Naive thymus-derived CD4-positive, alpha-beta T cell (primary cell): ENCODE measurements at regions of chr5 and their contacts with region 1.

Region 1: GRCh38 chr5:111757355-111758283 is 625 bp upstream of the NREP start:
- DNase-seq: peak; percentile 65 to 89 (median 86)
- ATAC-seq: peak; percentile 87
- H3K4me3 ChIP-seq: peak overlapping the region; percentile 64
- H3K4me3 Mint-ChIP-seq: peak overlapping the region; percentile 83 to 94 (median 90)
- H3K27ac ChIP-seq: peak overlapping the region; percentile 75
- H3K27ac Mint-ChIP-seq: peak overlapping the region; percentile 57 to 92 (median 83)
- H3K4me1 ChIP-seq: peaks cover 0 to 4% of the 10 kb centered on the region in 2 donors
- H3K4me1 Mint-ChIP-seq: peaks cover 4 to 29% (median 18%) of the 10 kb centered on the region in 7 donors
- H3K27me3 ChIP-seq: no peaks in the 10 kb centered on the region
- H3K27me3 Mint-ChIP-seq: peaks cover 0 to 6% (median 0%) of the 10 kb centered on the region in 5 donors

Region 2: GRCh38 chr5:109946649-109947009 is 1811.0 kb before region 1 on chr5:
- CTCF ChIA-PET with region 1: no interaction called
- POLR2A ChIA-PET with region 1: no interaction called
- intact Hi-C with region 1: no loop called
- DNase-seq: no peak
- ATAC-seq: no peak
- H3K4me3 ChIP-seq: no peak overlapping the region
- H3K4me3 Mint-ChIP-seq: no peak overlapping the region
- H3K27ac ChIP-seq: no peak overlapping the region
- H3K27ac Mint-ChIP-seq: no peak overlapping the region
- H3K4me1 ChIP-seq: peaks cover 0 to 12% of the 10 kb centered on the region in 2 donors
- H3K4me1 Mint-ChIP-seq: peaks cover 10 to 39% (median 23%) of the 10 kb centered on the region in 7 donors
- H3K27me3 ChIP-seq: no peaks in the 10 kb centered on the region
- H3K27me3 Mint-ChIP-seq: peaks cover 0 to 6% (median 0%) of the 10 kb centered on the region in 5 donors

Region 3: DNA sequence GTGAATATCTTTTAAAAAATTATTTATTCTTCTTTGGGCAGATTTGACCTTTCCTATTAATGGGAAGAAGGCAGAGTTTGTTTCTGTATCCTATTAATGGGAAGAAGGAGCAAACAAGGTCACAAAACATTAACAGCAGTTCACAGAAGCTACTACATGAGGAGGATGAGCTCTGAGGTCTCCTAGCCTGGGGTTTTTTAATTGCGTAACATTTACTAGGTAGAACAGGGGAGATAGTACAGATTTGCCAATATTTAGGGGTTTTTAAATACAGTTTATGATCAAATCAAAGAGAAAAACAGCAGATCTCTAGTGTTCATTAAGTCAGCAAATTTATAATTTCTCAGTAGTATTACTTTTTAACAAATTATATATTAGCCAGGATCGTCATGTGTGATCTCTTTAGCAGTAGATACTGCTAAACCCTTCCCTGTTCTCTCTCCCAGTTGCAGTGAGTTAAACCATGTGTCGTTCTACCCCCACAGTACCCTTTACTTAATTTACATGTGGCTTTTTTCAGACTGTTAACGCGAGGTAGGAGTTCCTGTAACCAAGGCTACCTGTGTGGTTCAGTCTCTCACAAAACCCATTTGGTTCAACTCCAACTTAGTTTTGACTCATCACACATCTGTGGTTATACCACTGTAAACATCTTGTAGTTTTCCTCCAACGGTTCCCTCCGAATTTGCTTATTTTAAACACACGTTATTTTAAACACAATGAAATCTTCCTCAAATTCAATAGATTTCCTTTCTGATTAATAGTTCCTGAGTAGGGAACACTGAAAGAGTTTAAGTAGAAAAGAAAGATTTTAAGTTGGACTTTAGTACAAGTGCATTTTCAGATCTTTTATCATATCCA is 1005.5 kb before region 1 on chr5:
- CTCF ChIA-PET with region 1: no interaction called
- POLR2A ChIA-PET with region 1: no interaction called
- intact Hi-C with region 1: loop called in 1 of 2 experiments (anchors 5 kb)
- DNase-seq: peak in 2 of 9 donors; percentile 8 to 30
- ATAC-seq: peak; percentile 82
- H3K4me3 ChIP-seq: no peak overlapping the region
- H3K4me3 Mint-ChIP-seq: peak overlapping the region in 1 of 10 donors; percentile 68
- H3K27ac ChIP-seq: no peak overlapping the region
- H3K27ac Mint-ChIP-seq: peak overlapping the region in 8 of 9 donors; percentile 5 to 84 (median 59)
- H3K4me1 ChIP-seq: peaks cover 0 to 12% of the 10 kb centered on the region in 2 donors
- H3K4me1 Mint-ChIP-seq: peaks cover 15 to 47% (median 34%) of the 10 kb centered on the region in 7 donors
- H3K27me3 ChIP-seq: no peaks in the 10 kb centered on the region
- H3K27me3 Mint-ChIP-seq: no peaks in the 10 kb centered on the region

Region 4: DNA sequence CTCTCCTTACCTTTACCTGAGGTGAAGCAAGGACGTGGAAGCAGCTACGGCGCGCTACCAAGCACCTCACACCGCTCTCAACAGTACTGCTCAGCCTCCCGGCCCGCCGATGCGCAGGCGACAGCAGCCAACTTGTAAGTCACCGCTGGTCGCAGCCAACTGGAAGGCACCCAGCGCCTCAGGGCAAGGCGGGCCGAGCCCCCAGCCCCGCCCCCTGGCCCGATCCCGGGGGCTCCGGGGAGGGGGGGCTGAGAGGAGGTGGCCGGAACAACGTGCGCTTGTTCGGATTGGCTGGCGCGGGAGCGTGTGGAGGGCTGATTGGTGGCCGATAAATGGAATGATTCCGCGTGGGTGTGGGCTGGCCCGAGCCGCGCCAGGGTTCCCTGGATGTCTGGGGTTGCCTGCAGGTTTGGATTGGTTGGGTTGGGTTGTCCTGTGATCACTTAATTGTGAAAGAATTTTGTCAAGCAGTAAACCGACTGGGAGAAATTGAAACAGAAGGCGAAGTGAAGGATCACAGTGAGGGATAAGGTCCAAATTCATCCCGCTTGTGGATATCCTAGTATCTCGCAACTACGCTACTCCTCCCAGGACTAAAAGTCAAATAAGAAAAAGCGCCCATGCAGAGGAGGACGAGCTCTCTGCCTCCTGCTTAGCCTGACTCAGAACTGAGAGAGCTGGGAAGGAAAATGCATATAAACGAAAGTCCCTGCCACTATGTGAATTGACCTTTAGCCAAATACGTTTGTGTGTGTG is 245.1 kb before region 1 on chr5 and contains the start of gene STARD4:
- CTCF ChIA-PET with region 1: no interaction called
- POLR2A ChIA-PET with region 1: interaction called, 4 read pairs
- intact Hi-C with region 1: loop called (anchors 1 kb)
- DNase-seq: peak; percentile 79 to 94 (median 92)
- ATAC-seq: peak; percentile 97
- H3K4me3 ChIP-seq: peak within 1 kb of the TSS; percentile 81
- H3K4me3 Mint-ChIP-seq: peak within 1 kb of the TSS; percentile 91 to 100 (median 98)
- H3K27ac ChIP-seq: peak within 1 kb of the TSS; percentile 73
- H3K27ac Mint-ChIP-seq: peak within 1 kb of the TSS; percentile 90 to 98 (median 94)
- H3K4me1 ChIP-seq: peaks cover 0 to 14% of the 10 kb centered on the region in 2 donors
- H3K4me1 Mint-ChIP-seq: peaks cover 17 to 53% (median 28%) of the 10 kb centered on the region in 7 donors
- H3K27me3 ChIP-seq: no peaks in the 10 kb centered on the region
- H3K27me3 Mint-ChIP-seq: no peaks in the 10 kb centered on the region
- total RNA-seq, gene STARD4: 11.1 to 70.8 (median 17.1) TPM

Region 5: GRCh38 chr5:111550279-111551020 is 207.2 kb before region 1 on chr5:
- CTCF ChIA-PET with region 1: no interaction called
- POLR2A ChIA-PET with region 1: no interaction called
- intact Hi-C with region 1: loop called (anchors 5 kb)
- DNase-seq: peak; percentile 35 to 79 (median 68)
- ATAC-seq: peak; percentile 93
- H3K4me3 ChIP-seq: no peak overlapping the region
- H3K4me3 Mint-ChIP-seq: peak overlapping the region in 1 of 10 donors; percentile 19
- H3K27ac ChIP-seq: no peak overlapping the region
- H3K27ac Mint-ChIP-seq: peak overlapping the region in 2 of 9 donors; percentile 36 to 47
- H3K4me1 ChIP-seq: peaks cover 0 to 12% of the 10 kb centered on the region in 2 donors
- H3K4me1 Mint-ChIP-seq: peaks cover 8 to 22% (median 20%) of the 10 kb centered on the region in 7 donors
- H3K27me3 ChIP-seq: no peaks in the 10 kb centered on the region
- H3K27me3 Mint-ChIP-seq: peaks cover 0 to 4% (median 2%) of the 10 kb centered on the region in 5 donors

Region 6: DNA sequence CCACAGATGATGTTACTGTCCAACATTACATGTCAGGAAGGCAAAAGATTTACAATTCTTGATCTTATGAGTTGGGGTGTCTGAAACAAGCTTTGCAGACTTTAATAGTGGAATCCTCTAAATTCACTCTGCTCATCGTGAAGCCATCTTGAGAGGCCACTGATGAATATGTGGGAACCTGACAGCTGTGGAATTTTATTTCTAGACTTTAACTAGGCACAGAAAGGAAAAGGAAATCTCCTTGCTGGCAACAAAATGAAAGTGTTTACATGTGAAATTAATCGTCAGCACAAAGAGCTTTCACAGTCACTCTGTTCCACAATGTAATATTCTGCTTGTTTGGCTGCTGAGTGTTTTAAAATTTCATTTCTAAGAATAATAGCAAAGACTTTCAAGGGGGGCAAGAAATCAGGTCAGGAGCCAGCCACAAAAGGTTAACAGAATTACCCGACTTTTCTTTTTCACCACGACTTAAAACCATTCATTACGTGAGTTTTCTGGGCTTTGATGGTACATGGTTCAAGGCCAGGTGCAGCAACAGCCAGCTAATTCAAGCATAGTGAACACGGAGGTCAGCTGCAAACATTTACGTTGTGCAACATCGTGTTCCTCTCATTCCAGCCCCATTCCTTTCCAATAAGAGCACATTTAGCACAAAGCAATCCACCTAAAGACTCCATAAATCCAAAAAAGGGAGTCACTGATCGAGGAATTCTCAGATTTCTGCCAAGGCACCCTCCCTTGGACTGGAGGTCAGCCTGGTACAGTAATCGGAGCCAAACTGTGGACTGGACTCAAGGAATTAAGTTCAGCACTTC is 15.2 kb before region 1 on chr5:
- CTCF ChIA-PET with region 1: no interaction called
- POLR2A ChIA-PET with region 1: no interaction called
- intact Hi-C with region 1: loop called in 1 of 2 experiments (anchors 1 kb)
- DNase-seq: no peak
- ATAC-seq: no peak
- H3K4me3 ChIP-seq: no peak overlapping the region
- H3K4me3 Mint-ChIP-seq: peak overlapping the region in 8 of 10 donors; percentile 22 to 77 (median 49)
- H3K27ac ChIP-seq: no peak overlapping the region
- H3K27ac Mint-ChIP-seq: peak overlapping the region in 4 of 9 donors; percentile 34 to 78 (median 70)
- H3K4me1 ChIP-seq: no peaks in the 10 kb centered on the region
- H3K4me1 Mint-ChIP-seq: peaks cover 0 to 46% (median 18%) of the 10 kb centered on the region in 7 donors
- H3K27me3 ChIP-seq: no peaks in the 10 kb centered on the region
- H3K27me3 Mint-ChIP-seq: peaks cover 0 to 15% (median 11%) of the 10 kb centered on the region in 5 donors

Region 7: GRCh38 chr5:112077180-112077579 is 319.6 kb after region 1 on chr5:
- CTCF ChIA-PET with region 1: no interaction called
- POLR2A ChIA-PET with region 1: no interaction called
- intact Hi-C with region 1: no loop called
- DNase-seq: no peak
- ATAC-seq: no peak
- H3K4me3 ChIP-seq: no peak overlapping the region
- H3K4me3 Mint-ChIP-seq: no peak overlapping the region
- H3K27ac ChIP-seq: no peak overlapping the region
- H3K27ac Mint-ChIP-seq: no peak overlapping the region
- H3K4me1 ChIP-seq: no peaks in the 10 kb centered on the region
- H3K4me1 Mint-ChIP-seq: peaks cover 0 to 6% (median 0%) of the 10 kb centered on the region in 7 donors
- H3K27me3 ChIP-seq: no peaks in the 10 kb centered on the region
- H3K27me3 Mint-ChIP-seq: peaks cover 0 to 20% (median 8%) of the 10 kb centered on the region in 5 donors

Region 8: DNA sequence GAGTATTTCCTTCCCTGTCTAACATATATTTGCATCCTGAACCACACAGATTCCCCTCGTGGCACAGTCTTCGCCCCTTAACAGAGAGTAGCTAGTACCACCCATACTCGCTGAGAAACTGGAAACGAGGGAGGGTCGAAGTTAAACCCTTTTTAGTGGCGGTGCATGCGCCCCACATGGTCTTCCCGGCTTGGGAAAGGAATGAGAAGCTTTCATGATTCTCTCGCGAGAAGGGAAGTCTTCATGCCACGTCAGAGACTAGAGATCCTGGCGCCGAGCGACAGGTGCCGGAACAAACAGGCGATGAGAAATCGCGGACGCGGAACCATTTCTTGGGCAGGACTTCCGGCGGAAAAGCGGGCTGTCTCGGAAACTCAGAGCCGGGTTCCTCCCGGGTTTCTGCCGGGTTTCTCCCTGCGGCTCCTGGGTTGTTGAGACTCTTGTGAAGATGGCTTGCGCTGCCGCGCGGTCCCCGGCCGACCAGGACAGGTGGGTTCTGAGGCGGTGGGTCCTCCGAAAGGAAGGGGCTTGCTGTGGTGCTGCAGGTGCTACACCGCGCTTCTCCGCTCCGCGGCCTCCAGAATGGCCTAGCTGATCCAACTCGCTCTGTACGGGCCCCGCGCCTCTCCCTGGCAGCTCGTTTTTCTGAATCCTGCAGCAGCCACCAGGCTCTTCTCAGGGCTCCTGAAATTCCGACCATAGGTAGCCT is 1103.5 kb after region 1 on chr5 and contains the start of gene SRP19:
- CTCF ChIA-PET with region 1: no interaction called
- POLR2A ChIA-PET with region 1: no interaction called
- intact Hi-C with region 1: loop called in 1 of 2 experiments (anchors 5 kb)
- DNase-seq: peak; percentile 78 to 93 (median 90)
- ATAC-seq: peak; percentile 96
- H3K4me3 ChIP-seq: peak within 1 kb of the TSS; percentile 88
- H3K4me3 Mint-ChIP-seq: peak within 1 kb of the TSS; percentile 91 to 97 (median 96)
- H3K27ac ChIP-seq: peak within 1 kb of the TSS; percentile 89
- H3K27ac Mint-ChIP-seq: peak within 1 kb of the TSS; percentile 95 to 99 (median 97)
- H3K4me1 ChIP-seq: peaks cover 19% of the 10 kb centered on the region in 2 donors
- H3K4me1 Mint-ChIP-seq: peaks cover 5 to 41% (median 32%) of the 10 kb centered on the region in 7 donors
- H3K27me3 ChIP-seq: no peaks in the 10 kb centered on the region
- H3K27me3 Mint-ChIP-seq: peaks cover 5 to 18% (median 6%) of the 10 kb centered on the region in 5 donors
- total RNA-seq, gene SRP19: 34.2 to 70.9 (median 41.5) TPM